GM12878 (cell line): ENCODE measurements at regions of chr12 and their contacts with region 1.

Region 1: GRCh38 chr12:57452937-57453509 is 2.1 kb upstream of the INHBE start:
- DNase-seq: no peak
- ATAC-seq: peak; percentile 68
- H3K4me3 ChIP-seq: no peak overlapping the region
- H3K27ac ChIP-seq: no peak overlapping the region
- H3K4me1 ChIP-seq: peaks cover 6% of the 10 kb centered on the region
- H3K27me3 ChIP-seq: no peaks in the 10 kb centered on the region
- CTCF ChIP-seq: peak; percentile 94 to 97 (median 96); a peak in 5 of 6 replicates
- EP300 ChIP-seq: no peak
- POLR2A ChIP-seq: no peak
- RAD21 ChIP-seq: peak; percentile 96

Region 2: GRCh38 chr12:56333679-56334489 is 1119.1 kb before region 1 on chr12 and contains the start of gene PAN2:
- CTCF ChIA-PET with region 1: no interaction called
- POLR2A ChIA-PET with region 1: no interaction called
- RAD21 ChIA-PET with region 1: no interaction called
- SMC1A ChIA-PET with region 1: no interaction called
- in situ Hi-C with region 1: no loop called
- intact Hi-C with region 1: no loop called
- DNase-seq: peak; percentile 89
- ATAC-seq: peak; percentile 97
- H3K4me3 ChIP-seq: peak within 1 kb of the TSS; percentile 97
- H3K27ac ChIP-seq: peak within 1 kb of the TSS; percentile 99
- H3K4me1 ChIP-seq: peaks cover 24% of the 10 kb centered on the region
- H3K27me3 ChIP-seq: no peaks in the 10 kb centered on the region
- CTCF ChIP-seq: peak; percentile 37 to 47 (median 43); a peak in 5 of 6 replicates
- EP300 ChIP-seq: 0 out of 4 replicates have a peak, but pooled peaks have one; percentile 6 to 29
- POLR2A ChIP-seq: peak; percentile 73
- RAD21 ChIP-seq: peak; percentile 33; the same call in 1 of the 2 replicates
- polyA plus RNA-seq, gene PAN2: 14.4 to 14.5 TPM

Region 3: GRCh38 chr12:57238854-57239554 is 214.0 kb before region 1 on chr12:
- CTCF ChIA-PET with region 1: interaction called, 90 read pairs
- POLR2A ChIA-PET with region 1: interaction called, 5 read pairs
- RAD21 ChIA-PET with region 1: interaction called, 85 read pairs
- SMC1A ChIA-PET with region 1: interaction called, 6 read pairs
- in situ Hi-C with region 1: no loop called
- intact Hi-C with region 1: no loop called
- DNase-seq: no peak
- ATAC-seq: peak; percentile 72
- H3K4me3 ChIP-seq: peak overlapping the region; percentile 68
- H3K27ac ChIP-seq: no peak overlapping the region
- H3K4me1 ChIP-seq: peaks cover 47% of the 10 kb centered on the region
- H3K27me3 ChIP-seq: peaks cover 5 to 8% of the 10 kb centered on the region in 2 experiments; a peak in 3 of 4 replicates
- CTCF ChIP-seq: peak; percentile 100; a peak in 5 of 6 replicates
- EP300 ChIP-seq: no peak
- POLR2A ChIP-seq: peak; percentile 66; the same call in 1 of the 2 replicates
- RAD21 ChIP-seq: peak; percentile 88

Region 4: GRCh38 chr12:57272337-57273151 is 180.5 kb before region 1 on chr12:
- CTCF ChIA-PET with region 1: interaction called, 210 read pairs
- POLR2A ChIA-PET with region 1: interaction called, 3 read pairs
- RAD21 ChIA-PET with region 1: interaction called, 73 read pairs
- SMC1A ChIA-PET with region 1: interaction called, 134 read pairs
- in situ Hi-C with region 1: no loop called
- intact Hi-C with region 1: no loop called
- DNase-seq: no peak
- ATAC-seq: no peak
- H3K4me3 ChIP-seq: no peak overlapping the region
- H3K27ac ChIP-seq: no peak overlapping the region
- H3K4me1 ChIP-seq: no peaks in the 10 kb centered on the region
- H3K27me3 ChIP-seq: no peaks in the 10 kb centered on the region
- CTCF ChIP-seq: no peak
- EP300 ChIP-seq: no peak
- POLR2A ChIP-seq: no peak
- RAD21 ChIP-seq: no peak

Region 5: DNA sequence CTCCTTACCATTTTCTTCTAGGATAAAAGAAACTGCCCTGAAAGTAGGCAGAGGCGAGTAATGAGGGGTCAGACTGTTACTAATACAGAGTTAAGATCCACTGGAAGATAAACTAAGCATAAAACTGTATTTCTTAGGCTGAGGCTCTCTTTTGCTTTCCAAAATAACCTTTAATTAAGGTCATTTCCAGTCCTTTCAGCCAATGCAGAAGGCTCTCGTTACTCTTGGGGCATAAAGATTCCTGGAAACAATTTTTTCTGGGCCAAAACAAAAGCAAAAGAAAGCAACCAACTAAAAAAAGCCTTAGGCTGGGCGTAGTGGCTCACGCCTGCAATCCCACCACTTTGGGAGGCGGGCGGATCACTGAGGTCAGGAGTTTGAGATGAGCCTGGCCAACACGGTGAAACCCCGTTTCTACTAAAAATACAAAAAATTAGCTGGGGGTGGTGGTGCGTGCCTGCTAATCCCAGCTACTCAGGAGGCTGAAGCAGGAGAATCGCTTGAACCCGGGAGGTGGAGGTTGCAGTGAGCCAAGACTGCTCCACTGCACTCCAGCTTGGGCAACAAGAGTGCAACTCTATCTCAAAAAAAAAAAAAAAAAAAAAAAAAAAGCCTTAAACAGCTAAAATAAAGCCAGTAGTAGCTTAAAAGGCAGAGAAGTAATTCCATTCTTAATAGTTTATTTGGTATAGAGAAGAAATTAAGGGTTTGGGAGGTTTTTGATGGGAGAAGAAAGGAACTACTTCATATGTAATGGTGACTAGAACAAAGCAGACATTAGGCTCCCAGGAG is 133.1 kb before region 1 on chr12:
- CTCF ChIA-PET with region 1: interaction called, 10 read pairs
- POLR2A ChIA-PET with region 1: no interaction called
- RAD21 ChIA-PET with region 1: interaction called, 3 read pairs
- SMC1A ChIA-PET with region 1: interaction called, 4 read pairs
- in situ Hi-C with region 1: loop called (anchors 10 kb)
- intact Hi-C with region 1: no loop called
- DNase-seq: no peak
- ATAC-seq: no peak
- H3K4me3 ChIP-seq: no peak overlapping the region
- H3K27ac ChIP-seq: no peak overlapping the region
- H3K4me1 ChIP-seq: no peaks in the 10 kb centered on the region
- H3K27me3 ChIP-seq: no peaks in the 10 kb centered on the region
- CTCF ChIP-seq: no peak
- EP300 ChIP-seq: no peak
- POLR2A ChIP-seq: no peak
- RAD21 ChIP-seq: no peak

Region 6: GRCh38 chr12:57410534-57410933 is 42.5 kb before region 1 on chr12:
- CTCF ChIA-PET with region 1: interaction called, 14 read pairs
- POLR2A ChIA-PET with region 1: interaction called, 4 read pairs
- RAD21 ChIA-PET with region 1: interaction called, 7 read pairs
- SMC1A ChIA-PET with region 1: interaction called, 9 read pairs
- in situ Hi-C with region 1: no loop called
- intact Hi-C with region 1: no loop called
- DNase-seq: no peak
- ATAC-seq: no peak
- H3K4me3 ChIP-seq: no peak overlapping the region
- H3K27ac ChIP-seq: no peak overlapping the region
- H3K4me1 ChIP-seq: no peaks in the 10 kb centered on the region
- H3K27me3 ChIP-seq: no peaks in the 10 kb centered on the region
- CTCF ChIP-seq: no peak
- EP300 ChIP-seq: no peak
- POLR2A ChIP-seq: no peak
- RAD21 ChIP-seq: no peak

Region 7: DNA sequence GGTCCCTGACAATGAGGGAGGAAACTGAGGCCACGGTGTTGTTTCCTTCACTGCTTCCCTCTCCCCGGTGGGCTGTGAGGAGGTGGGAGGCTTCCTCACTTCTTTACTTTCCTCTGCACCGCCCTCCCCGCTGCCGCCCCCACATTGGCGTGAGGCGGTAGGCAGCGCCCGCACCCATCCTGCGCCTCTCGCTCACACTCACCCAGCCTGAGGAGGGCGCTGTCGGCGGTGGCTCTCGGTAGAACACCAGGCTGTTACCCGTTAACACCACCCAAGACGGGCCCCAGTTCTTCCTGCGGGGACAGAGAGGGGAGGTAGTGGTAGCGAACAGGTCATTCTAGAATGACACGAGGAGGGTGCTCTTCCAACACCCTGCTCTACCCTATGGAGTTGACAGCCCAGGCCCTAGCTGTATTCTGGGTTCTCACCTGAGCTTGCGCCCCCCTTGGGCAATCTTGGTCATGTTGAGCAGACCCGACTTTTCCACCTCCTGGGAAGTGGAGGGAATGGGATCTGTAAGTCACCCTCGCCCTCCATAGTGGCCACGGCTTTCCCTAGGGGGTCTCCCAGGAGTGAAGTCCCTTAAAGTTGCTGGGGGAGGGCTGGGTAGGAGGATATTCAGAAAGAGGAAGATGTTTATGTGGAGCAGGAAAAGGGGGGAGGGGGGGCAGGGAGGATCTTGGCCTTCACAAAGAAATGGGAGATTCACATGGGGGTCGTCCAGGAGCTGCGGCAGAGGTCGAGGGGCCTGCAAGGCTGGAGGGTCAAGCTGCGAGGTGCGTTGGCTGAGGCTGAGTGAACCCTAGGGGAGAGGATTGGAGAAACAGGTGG is 23.4 kb after region 1 on chr12:
- CTCF ChIA-PET with region 1: interaction called, 114 read pairs
- POLR2A ChIA-PET with region 1: interaction called, 10 read pairs
- RAD21 ChIA-PET with region 1: interaction called, 15 read pairs
- SMC1A ChIA-PET with region 1: interaction called, 10 read pairs
- in situ Hi-C with region 1: no loop called
- intact Hi-C with region 1: no loop called
- DNase-seq: no peak
- ATAC-seq: peak; percentile 62
- H3K4me3 ChIP-seq: peak overlapping the region; percentile 92
- H3K27ac ChIP-seq: peak overlapping the region; percentile 85
- H3K4me1 ChIP-seq: peaks cover 34% of the 10 kb centered on the region
- H3K27me3 ChIP-seq: no peaks in the 10 kb centered on the region
- CTCF ChIP-seq: peak; percentile 48 to 81 (median 72)
- EP300 ChIP-seq: no peak
- POLR2A ChIP-seq: peak; percentile 73
- RAD21 ChIP-seq: peak; percentile 43

Region 8: GRCh38 chr12:57604454-57604991 is 151.5 kb after region 1 on chr12 and contains the start of gene DTX3:
- CTCF ChIA-PET with region 1: no interaction called
- POLR2A ChIA-PET with region 1: no interaction called
- RAD21 ChIA-PET with region 1: no interaction called
- SMC1A ChIA-PET with region 1: no interaction called
- in situ Hi-C with region 1: no loop called
- intact Hi-C with region 1: no loop called
- DNase-seq: no peak
- ATAC-seq: peak; percentile 71
- H3K4me3 ChIP-seq: peak within 1 kb of the TSS; percentile 83
- H3K27ac ChIP-seq: peak within 1 kb of the TSS; percentile 56
- H3K4me1 ChIP-seq: peaks cover 4% of the 10 kb centered on the region; the same call in 1 of the 2 replicates
- H3K27me3 ChIP-seq: no peaks in the 10 kb centered on the region
- CTCF ChIP-seq: no peak
- EP300 ChIP-seq: no peak
- POLR2A ChIP-seq: peak; percentile 75
- RAD21 ChIP-seq: no peak
- polyA plus RNA-seq, gene DTX3: 1.1 to 2.1 TPM

Region 9: GRCh38 chr12:58081488-58081887 is 628.5 kb after region 1 on chr12:
- CTCF ChIA-PET with region 1: no interaction called
- POLR2A ChIA-PET with region 1: no interaction called
- RAD21 ChIA-PET with region 1: no interaction called
- SMC1A ChIA-PET with region 1: no interaction called
- in situ Hi-C with region 1: no loop called
- intact Hi-C with region 1: no loop called
- DNase-seq: no peak
- ATAC-seq: no peak
- H3K4me3 ChIP-seq: no peak overlapping the region
- H3K27ac ChIP-seq: no peak overlapping the region
- H3K4me1 ChIP-seq: no peaks in the 10 kb centered on the region
- H3K27me3 ChIP-seq: no peaks in the 10 kb centered on the region
- CTCF ChIP-seq: no peak
- EP300 ChIP-seq: no peak
- POLR2A ChIP-seq: no peak
- RAD21 ChIP-seq: no peak

Region 10: DNA sequence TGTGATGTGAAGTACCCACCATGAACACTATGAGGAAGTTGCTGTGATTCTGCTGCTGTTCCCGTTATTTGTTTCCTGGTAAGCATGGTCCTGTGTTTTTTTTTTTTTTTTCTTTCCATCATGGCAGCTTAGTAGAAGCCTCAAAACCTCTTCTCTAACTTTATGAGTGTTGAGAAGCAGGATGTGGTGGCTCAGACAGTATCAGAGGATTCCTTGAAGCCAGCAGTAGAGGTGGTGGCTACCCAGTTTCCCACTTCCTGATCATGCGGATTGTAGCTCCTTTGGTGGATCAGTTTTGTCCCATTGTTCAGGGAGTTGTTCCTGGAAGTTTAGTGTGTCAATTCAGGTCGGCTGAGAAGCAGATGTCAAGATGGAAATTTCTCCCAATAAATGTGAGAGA is 664.2 kb after region 1 on chr12:
- CTCF ChIA-PET with region 1: no interaction called
- POLR2A ChIA-PET with region 1: no interaction called
- RAD21 ChIA-PET with region 1: no interaction called
- SMC1A ChIA-PET with region 1: no interaction called
- in situ Hi-C with region 1: no loop called
- intact Hi-C with region 1: no loop called
- DNase-seq: no peak
- ATAC-seq: no peak
- H3K4me3 ChIP-seq: no peak overlapping the region
- H3K27ac ChIP-seq: no peak overlapping the region
- H3K4me1 ChIP-seq: no peaks in the 10 kb centered on the region
- H3K27me3 ChIP-seq: no peaks in the 10 kb centered on the region
- CTCF ChIP-seq: no peak
- EP300 ChIP-seq: no peak
- POLR2A ChIP-seq: no peak
- RAD21 ChIP-seq: no peak